AG04449 (cell line): ENCODE measurements at regions of chr14 and their contacts with region 1.

Region 1: DNA sequence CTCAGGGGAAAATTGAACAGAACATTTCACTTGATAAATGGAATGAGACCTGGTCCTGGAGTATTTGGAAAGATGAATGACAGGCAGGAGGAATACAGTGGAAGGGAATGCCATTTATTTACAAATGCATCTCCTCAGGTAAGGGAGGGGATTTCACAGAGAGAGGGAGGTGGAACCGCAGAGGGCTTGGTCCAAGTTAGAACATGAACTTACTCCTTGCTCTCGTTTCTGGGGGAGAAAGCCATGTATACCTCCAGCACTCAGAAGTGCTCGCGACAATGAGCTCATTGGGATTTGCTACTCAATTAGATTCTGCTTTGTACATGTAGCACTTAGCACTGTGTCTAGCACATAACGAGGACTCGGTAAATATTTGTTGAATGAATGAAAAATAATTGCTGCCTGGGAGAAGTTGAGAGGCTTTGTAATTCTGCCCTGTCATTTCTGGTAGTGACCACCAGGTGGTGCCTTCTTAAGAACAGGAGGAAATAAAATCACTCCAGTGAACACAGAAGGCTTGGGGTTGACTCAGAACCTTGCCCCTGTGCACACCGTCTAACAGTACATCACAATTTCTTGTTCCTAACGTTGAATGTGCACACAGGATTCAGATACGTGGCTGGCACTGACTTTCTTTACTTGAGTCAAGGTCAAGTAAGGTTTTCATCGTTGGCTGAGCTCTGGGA is 91.6 kb downstream of the RGS6 start:
- DNase-seq: no peak
- H3K4me3 ChIP-seq: no peak overlapping the region
- CTCF ChIP-seq: peak; percentile 3

Region 2: GRCh38 chr14:72000907-72001306 is 23.0 kb before region 1 on chr14:
- CTCF ChIA-PET with region 1: no interaction called
- POLR2A ChIA-PET with region 1: no interaction called
- DNase-seq: no peak
- H3K4me3 ChIP-seq: no peak overlapping the region
- CTCF ChIP-seq: no peak

Region 3: DNA sequence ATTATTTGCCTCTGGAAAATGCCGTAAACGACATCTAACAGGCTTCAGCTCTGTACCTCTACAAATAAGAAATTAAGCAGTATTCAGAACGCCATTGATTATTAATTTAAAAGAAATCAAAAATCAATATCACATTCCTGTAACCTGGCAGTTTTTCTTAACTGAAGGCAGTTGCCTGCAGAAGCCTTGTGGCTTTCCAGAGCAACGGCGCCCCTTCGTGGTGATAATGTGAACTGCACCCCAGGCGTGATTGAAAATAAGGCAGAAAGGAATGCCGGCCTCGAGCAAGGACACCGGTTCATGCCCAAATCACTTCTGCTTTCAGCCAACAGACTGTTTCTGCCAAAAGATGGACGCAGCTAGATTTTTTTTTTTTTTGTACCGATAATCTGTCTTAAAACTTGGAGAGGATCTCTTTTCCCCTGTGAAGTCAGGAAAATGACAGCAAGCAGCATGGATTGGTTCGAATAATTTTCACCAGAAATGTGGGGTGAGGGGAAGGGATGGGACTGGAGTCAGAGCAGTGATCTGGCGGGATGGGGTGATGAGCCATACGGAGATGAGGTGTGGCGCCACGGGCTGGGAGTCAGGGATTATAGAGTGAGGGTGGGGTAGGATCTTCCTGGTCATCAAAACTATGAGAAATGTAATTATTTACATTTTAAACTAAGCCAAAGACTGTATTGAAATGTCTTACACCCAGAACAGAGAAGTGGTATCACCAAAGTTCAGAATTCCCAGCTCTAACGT is 397.0 kb after region 1 on chr14:
- CTCF ChIA-PET with region 1: interaction called, 16 read pairs
- POLR2A ChIA-PET with region 1: no interaction called
- DNase-seq: no peak
- H3K4me3 ChIP-seq: no peak overlapping the region
- CTCF ChIP-seq: peak; percentile 83